ENCODE measurements at regions of chr6 and their contacts with region 1.

Region 1: DNA sequence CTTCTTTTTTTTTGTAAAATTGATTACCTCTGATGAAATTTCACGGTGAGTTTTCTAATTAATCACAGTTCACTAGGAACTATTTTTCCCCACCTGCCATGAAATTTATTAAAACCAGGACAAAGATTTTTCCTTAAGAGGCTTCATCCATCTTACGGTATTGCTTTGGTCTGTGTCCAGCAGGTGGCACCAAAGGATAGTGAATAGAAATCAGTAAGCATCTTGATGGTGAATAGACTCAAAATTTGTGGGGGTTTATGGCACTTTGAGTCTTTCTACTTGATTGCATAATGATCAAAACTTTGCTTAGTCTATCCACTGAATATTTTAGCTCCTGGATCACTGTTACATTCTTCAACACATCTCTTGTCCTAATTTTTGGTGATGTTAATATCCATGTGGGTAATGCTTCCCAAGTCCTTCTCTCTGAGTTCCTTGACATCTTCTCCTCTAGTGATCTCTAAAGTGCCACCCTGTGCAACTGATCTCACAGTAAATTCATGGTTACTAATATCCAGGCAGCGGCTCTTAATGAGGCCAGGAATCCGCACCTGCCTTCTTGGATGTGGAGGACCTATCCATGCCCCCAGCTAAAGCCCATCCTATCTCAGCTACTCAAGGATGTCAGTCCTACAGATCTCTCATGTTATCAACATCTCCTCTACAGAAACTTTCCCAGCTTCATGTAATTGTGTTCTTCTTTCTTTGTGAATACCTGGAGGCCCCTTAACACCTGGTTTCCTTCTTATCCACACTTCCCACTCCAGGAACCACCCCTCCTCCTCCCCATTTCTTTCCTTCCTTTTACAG is 54.5 kb downstream of the STMND1 start:
- DNase-seq: peak; percentile 20
- ATAC-seq: peak; percentile 79
- H3K4me3 ChIP-seq: no peak overlapping the region
- H3K27ac ChIP-seq: no peak overlapping the region
- H3K4me1 ChIP-seq: no peaks in the 10 kb centered on the region
- H3K27me3 ChIP-seq: no peaks in the 10 kb centered on the region
- CTCF ChIP-seq: peak; percentile 61 to 79 (median 66); a peak in 5 of 6 replicates
- EP300 ChIP-seq: no peak
- POLR2A ChIP-seq: no peak
- RAD21 ChIP-seq: peak; percentile 94

Region 2: GRCh38 chr6:17212546-17213371 is 56.4 kb after region 1 on chr6:
- CTCF ChIA-PET with region 1: no interaction called
- POLR2A ChIA-PET with region 1: no interaction called
- RAD21 ChIA-PET with region 1: no interaction called
- SMC1A ChIA-PET with region 1: no interaction called
- in situ Hi-C with region 1: no loop called
- intact Hi-C with region 1: no loop called
- DNase-seq: no peak
- ATAC-seq: no peak
- H3K4me3 ChIP-seq: no peak overlapping the region
- H3K27ac ChIP-seq: no peak overlapping the region
- H3K4me1 ChIP-seq: no peaks in the 10 kb centered on the region
- H3K27me3 ChIP-seq: no peaks in the 10 kb centered on the region
- CTCF ChIP-seq: no peak
- EP300 ChIP-seq: no peak
- POLR2A ChIP-seq: no peak
- RAD21 ChIP-seq: no peak

Region 3: DNA sequence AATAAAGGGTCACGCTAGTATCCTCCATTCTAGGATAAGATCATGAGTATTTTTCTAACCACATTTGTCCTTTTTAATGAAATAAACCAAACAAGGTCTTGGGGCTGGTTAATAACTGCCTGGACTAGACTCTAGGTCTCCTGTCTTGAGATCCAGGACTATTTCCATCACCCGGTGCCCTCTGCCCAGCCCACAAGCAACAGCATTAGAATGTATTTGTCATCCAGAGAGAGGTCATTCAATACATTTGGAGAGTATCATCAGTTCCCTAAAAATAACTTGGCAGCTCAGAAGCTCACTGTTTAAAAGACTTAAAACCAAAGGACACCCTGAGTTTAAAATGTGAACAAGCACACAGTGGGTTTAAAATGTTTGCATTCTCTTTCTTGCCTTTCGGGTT is 120.4 kb after region 1 on chr6:
- CTCF ChIA-PET with region 1: no interaction called
- POLR2A ChIA-PET with region 1: no interaction called
- RAD21 ChIA-PET with region 1: no interaction called
- SMC1A ChIA-PET with region 1: no interaction called
- in situ Hi-C with region 1: no loop called
- intact Hi-C with region 1: no loop called
- DNase-seq: no peak
- ATAC-seq: no peak
- H3K4me3 ChIP-seq: no peak overlapping the region
- H3K27ac ChIP-seq: no peak overlapping the region
- H3K4me1 ChIP-seq: no peaks in the 10 kb centered on the region
- H3K27me3 ChIP-seq: peaks cover 0 to 3% of the 10 kb centered on the region in 2 experiments; a peak in 3 of 4 replicates
- CTCF ChIP-seq: no peak
- EP300 ChIP-seq: no peak
- POLR2A ChIP-seq: no peak
- RAD21 ChIP-seq: no peak

Region 4: DNA sequence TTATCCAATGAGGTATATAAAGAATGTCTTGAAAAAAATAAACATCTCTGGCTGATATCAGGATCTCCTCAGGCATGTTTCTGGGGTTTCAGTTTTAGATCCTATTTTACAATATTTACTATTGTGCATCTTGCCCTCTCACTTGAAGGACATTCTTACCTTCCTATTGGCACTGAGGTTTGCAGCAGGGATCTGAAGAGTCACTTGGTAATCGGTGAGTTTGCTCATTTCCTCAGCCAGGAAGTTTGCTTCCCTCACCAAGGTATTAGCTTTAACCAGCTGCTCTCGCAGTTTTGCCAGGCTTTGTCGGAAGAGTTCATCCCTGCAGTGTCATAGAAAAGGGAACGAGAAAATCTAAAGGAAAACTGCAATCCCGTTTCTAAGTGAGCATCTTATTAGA is 652.3 kb after region 1 on chr6:
- CTCF ChIA-PET with region 1: interaction called, 9 read pairs
- POLR2A ChIA-PET with region 1: no interaction called
- RAD21 ChIA-PET with region 1: no interaction called
- SMC1A ChIA-PET with region 1: interaction called, 4 read pairs
- in situ Hi-C with region 1: no loop called
- intact Hi-C with region 1: loop called (anchors 2 kb)
- DNase-seq: no peak
- ATAC-seq: no peak
- H3K4me3 ChIP-seq: no peak overlapping the region
- H3K27ac ChIP-seq: no peak overlapping the region
- H3K4me1 ChIP-seq: no peaks in the 10 kb centered on the region
- H3K27me3 ChIP-seq: no peaks in the 10 kb centered on the region
- CTCF ChIP-seq: no peak
- EP300 ChIP-seq: no peak
- POLR2A ChIP-seq: no peak
- RAD21 ChIP-seq: no peak

Region 5: GRCh38 chr6:17820055-17820454 is 663.7 kb after region 1 on chr6:
- CTCF ChIA-PET with region 1: interaction called, 7 read pairs
- POLR2A ChIA-PET with region 1: no interaction called
- RAD21 ChIA-PET with region 1: interaction called, 4 read pairs
- SMC1A ChIA-PET with region 1: interaction called, 7 read pairs
- in situ Hi-C with region 1: loop called (anchors 5 kb)
- intact Hi-C with region 1: loop called (anchors 1 kb)
- DNase-seq: no peak
- ATAC-seq: peak; percentile 60; the same call in 2 of the 3 replicates
- H3K4me3 ChIP-seq: no peak overlapping the region
- H3K27ac ChIP-seq: no peak overlapping the region
- H3K4me1 ChIP-seq: no peaks in the 10 kb centered on the region
- H3K27me3 ChIP-seq: no peaks in the 10 kb centered on the region
- CTCF ChIP-seq: no peak
- EP300 ChIP-seq: no peak
- POLR2A ChIP-seq: no peak
- RAD21 ChIP-seq: no peak